ENCODE measurements at regions of chr6 and their contacts with region 1.

Region 1: GRCh38 chr6:111210194-111210728 is 123.0 kb downstream of the SLC16A10 start:
- DNase-seq: peak in 3 of 7 donors; percentile 10 to 20 (median 14)
- H3K4me3 ChIP-seq: no peak overlapping the region
- H3K27ac ChIP-seq: no peak overlapping the region
- H3K4me1 ChIP-seq: no peaks in the 10 kb centered on the region
- H3K27me3 ChIP-seq: no peaks in the 10 kb centered on the region
- CTCF ChIP-seq: peak; percentile 41 to 83 (median 76)
- POLR2A ChIP-seq: no peak

Region 2: DNA sequence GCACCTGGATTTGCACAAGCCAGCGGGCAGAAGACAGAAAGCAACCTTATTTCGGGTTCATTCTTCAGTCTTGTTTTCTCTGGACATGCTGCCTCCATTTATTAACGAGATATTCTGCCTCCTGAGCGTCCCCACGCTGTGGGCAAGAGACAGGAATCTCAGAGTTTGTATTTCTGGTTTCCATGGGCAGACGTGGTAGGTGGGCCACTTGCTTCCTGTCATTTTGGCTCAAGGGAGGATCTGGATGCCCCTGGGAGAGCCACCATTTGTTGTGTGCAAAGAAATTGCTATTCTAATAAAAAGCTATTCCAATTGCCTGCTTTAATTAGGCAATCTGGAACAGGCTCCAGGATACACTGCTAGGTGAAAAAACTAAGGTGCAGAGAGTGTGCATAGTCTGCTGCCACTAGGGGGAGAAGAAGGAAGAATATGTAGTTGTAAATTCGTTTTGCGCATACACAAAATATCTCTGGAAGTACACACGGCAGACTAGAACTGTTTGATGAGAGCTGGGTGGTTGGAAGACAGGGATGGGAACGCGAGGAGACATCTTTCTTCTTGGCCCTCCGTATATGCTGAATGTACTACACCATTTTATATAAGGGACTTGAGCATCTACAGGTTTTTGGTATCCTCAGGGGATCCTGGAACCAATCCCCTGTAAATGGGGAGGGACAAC is 153.0 kb before region 1 on chr6:
- intact Hi-C with region 1: loop called (anchors 5 kb)
- DNase-seq: peak in 3 of 7 donors; percentile 35 to 53 (median 43)
- H3K4me3 ChIP-seq: no peak overlapping the region
- H3K27ac ChIP-seq: no peak overlapping the region
- H3K4me1 ChIP-seq: no peaks in the 10 kb centered on the region
- H3K27me3 ChIP-seq: no peaks in the 10 kb centered on the region
- CTCF ChIP-seq: peak; percentile 73 to 91 (median 78)
- POLR2A ChIP-seq: no peak

Region 3: DNA sequence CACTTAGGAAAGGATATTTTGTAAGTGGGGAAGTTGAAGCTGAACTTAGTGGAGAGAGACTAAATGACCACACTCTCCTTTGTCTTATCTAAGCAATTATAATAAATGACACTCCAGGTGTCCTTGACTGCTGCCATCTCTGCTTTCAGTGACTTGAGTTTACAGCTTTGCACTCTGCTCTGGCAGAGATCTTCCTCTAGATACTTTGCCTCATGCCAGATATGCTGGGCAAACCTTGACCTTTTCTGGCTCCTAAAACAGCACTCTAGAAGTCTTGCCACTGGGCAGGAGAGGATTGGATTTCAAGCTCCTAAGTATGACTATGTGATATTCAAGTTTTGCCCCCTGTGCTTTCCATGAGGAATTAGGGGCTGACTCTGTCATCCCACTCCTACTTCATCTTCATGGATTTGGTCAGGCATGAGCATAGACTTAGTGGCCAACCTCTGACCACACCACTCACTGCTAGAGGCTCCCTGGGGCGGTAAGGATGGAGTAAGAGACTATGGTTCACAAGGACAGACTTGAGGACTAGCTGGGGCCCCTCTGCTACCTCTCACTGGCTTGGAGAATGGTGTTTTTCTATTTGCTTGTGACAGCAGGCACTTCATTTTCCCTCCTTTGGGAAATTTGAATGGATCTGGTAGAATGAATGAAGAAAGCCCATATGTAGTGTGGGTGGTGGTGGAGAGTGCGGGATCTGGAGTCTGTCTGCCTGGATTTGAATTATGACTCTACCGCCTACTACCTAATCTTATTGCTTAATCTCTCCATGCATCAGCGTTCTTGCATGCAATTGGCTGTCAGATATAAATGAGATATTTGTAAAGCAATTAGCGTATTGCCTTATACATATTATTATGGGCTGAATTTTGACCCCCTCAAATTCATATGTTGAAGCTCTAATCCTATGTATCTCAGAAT is 81.3 kb after region 1 on chr6:
- intact Hi-C with region 1: no loop called
- DNase-seq: peak in 4 of 7 donors; percentile 13 to 70 (median 29)
- H3K4me3 ChIP-seq: no peak overlapping the region
- H3K27ac ChIP-seq: no peak overlapping the region
- H3K4me1 ChIP-seq: peaks cover 0 to 13% of the 10 kb centered on the region in 2 donors
- H3K27me3 ChIP-seq: no peaks in the 10 kb centered on the region
- CTCF ChIP-seq: no peak
- POLR2A ChIP-seq: no peak

Region 4: DNA sequence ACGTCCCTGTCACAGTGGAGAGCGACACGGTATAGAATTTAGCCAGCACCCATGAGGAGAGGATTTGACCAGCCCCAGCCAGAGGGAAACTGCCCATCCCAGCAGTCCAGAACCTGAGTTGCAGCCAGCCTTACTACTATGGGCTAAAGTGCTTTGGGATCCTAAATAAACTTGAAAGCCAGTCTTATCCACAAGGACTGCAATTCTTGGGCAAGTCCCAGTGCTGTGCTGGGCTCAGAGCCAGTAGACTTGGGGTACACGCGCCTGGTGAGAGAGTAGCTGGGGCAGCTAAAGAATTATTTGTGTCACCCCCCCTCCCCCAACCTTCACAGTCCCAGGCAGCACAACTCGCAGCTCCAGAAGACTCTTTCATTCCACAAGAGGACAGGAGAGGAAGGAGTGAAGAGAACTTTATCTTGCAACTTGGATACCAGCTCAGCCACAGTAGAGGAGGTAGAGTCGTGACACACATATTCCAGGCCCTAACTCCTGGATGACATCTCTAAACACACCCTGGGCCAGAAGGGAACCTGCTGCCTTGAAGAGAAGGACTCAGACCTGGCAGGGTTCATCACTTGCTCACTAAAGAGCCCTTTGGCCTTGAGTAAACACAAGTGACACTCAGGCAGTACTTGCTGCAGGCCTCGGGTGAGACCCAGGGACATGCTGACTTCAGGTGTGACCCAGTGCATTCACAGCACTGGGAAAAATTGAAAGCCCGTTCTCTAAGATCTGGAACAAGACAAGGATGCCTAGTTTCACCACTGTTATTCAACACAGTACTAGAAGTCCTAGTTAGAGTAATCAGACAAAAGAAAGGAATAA is 172.4 kb after region 1 on chr6:
- intact Hi-C with region 1: no loop called
- DNase-seq: peak in 3 of 7 donors; percentile 7 to 43 (median 36)
- H3K4me3 ChIP-seq: no peak overlapping the region
- H3K27ac ChIP-seq: no peak overlapping the region
- H3K4me1 ChIP-seq: no peaks in the 10 kb centered on the region
- H3K27me3 ChIP-seq: no peaks in the 10 kb centered on the region
- CTCF ChIP-seq: no peak
- POLR2A ChIP-seq: no peak

Region 5: GRCh38 chr6:111642463-111643158 is 432.4 kb after region 1 on chr6:
- intact Hi-C with region 1: no loop called
- DNase-seq: peak; percentile 71 to 91 (median 78)
- H3K4me3 ChIP-seq: no peak overlapping the region
- H3K27ac ChIP-seq: no peak overlapping the region
- H3K4me1 ChIP-seq: peaks cover 0 to 4% of the 10 kb centered on the region in 2 donors
- H3K27me3 ChIP-seq: no peaks in the 10 kb centered on the region
- CTCF ChIP-seq: peak; percentile 51 to 86 (median 74)
- POLR2A ChIP-seq: no peak

Measured in adrenal gland (tissue), 19 donors.